ENCODE measurements at regions of chr1 and their contacts with region 1.

Region 1: DNA sequence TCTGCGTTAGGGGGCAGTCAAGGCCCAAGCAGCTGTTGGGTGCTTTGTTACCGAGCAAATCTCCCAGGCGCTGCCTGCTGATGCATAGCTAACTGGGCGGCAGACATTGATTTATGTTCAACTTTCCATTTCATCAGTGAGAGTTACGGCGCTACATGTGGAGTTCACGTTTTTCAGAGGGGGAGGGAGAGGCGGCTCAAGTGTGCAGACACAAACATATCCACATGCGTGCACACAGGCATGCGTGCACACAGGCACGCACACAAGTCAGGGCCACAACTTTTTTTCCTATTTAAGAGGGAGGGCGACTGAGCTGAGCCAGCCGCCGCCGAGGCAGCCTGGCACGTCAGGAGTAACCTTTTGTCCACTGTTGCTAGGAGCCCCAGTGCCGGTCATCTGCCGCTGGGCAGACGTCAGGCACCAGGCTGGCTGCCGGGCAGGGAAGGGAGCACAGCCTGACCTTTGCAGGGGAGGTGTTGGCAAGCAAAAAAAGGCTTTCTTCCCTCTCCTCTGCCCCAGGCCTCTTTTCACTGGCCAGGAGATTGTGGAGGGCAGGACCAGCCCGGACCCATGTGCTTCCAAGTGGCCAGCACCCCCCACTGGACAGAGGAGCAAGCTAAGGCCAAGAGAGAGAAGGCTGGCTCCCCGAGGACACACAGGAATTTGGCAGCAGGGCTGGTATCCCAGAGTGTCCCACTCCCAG is 73.3 kb downstream of the MRPL37 start:
- DNase-seq: peak; percentile 43 to 71
- ATAC-seq: peak; percentile 31 to 86 (median 67)
- H3K4me3 ChIP-seq: peak overlapping the region in 3 of 10 donors; percentile 1 to 11 (median 3)
- H3K27ac ChIP-seq: peak overlapping the region; percentile 7 to 91 (median 88)
- H3K4me1 ChIP-seq: peaks cover 49 to 89% (median 69%) of the 10 kb centered on the region in 9 donors
- H3K27me3 ChIP-seq: no peaks in the 10 kb centered on the region
- CTCF ChIP-seq: peak in 5 of 9 donors; percentile 27 to 54 (median 32)

Region 2: GRCh38 chr1:54199765-54200518 is 73.3 kb before region 1 on chr1 and contains the starts of genes CYB5RL and MRPL37:
- intact Hi-C with region 1: loop called in 1 of 10 experiments (anchors 5 kb)
- DNase-seq: peak; percentile 85 to 98
- ATAC-seq: peak; percentile 97 to 100 (median 99)
- H3K4me3 ChIP-seq: peak within 1 kb of the TSS; percentile 68 to 100 (median 84)
- H3K27ac ChIP-seq: peak within 1 kb of the TSS in 9 of 10 donors; percentile 60 to 90 (median 81)
- H3K4me1 ChIP-seq: peaks cover 6 to 32% (median 20%) of the 10 kb centered on the region in 9 donors
- H3K27me3 ChIP-seq: no peaks in the 10 kb centered on the region
- CTCF ChIP-seq: no peak
- total RNA-seq, gene CYB5RL: 3.2 to 8.3 (median 5.8) TPM
- total RNA-seq, gene MRPL37: 82.2 to 97.4 (median 90.2) TPM

Region 3: DNA sequence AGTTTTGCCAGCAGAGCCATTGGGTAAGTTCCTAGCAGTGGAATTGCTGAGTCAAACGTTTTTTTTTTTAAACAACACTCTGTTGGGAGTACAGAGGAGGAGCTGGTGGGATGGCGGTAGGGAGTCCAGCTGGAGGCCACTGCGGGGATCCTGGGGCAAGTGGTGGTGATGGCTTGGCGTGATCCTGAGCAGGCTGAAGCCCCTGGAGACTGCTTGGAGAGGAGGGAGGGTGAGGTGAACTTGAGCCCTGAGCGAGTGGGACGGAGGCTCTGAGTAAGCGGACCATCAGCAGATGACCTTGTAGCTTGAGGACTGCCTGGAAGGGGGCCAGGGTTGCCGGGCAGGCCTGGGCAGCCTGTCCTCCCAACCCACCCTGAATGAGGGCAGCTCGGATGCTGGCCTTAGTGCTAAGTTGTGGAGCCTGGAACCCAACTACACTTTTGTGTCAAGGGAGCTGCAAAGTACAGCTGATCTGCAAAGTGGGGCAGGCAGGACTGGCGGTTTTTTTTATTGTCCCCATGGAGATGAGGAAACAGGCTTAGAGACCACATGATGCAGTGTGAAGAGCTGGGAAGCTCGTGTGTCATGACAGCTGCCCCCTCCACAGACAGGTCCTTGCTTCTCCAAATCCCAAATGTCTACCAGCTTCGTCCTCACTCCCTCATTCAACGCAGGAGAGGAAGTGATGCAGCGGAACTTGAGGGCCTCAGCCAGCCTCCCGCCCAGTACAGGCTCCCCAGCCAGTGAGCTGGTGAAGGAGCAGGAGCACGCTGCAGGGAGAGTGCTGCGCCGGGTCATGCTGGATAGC is 53.0 kb before region 1 on chr1:
- intact Hi-C with region 1: loop called in 1 of 10 experiments (anchors 5 kb)
- DNase-seq: peak; percentile 68 to 69
- ATAC-seq: peak; percentile 62 to 84 (median 77)
- H3K4me3 ChIP-seq: peak overlapping the region in 5 of 10 donors; percentile 13 to 25 (median 21)
- H3K27ac ChIP-seq: peak overlapping the region in 9 of 10 donors; percentile 9 to 71 (median 59)
- H3K4me1 ChIP-seq: peaks cover 6 to 39% (median 28%) of the 10 kb centered on the region in 9 donors
- H3K27me3 ChIP-seq: no peaks in the 10 kb centered on the region
- CTCF ChIP-seq: no peak

Region 4: GRCh38 chr1:54249819-54250435 is 23.3 kb before region 1 on chr1:
- intact Hi-C with region 1: no loop called
- DNase-seq: no peak
- ATAC-seq: peak in 7 of 8 donors; percentile 25 to 72 (median 49)
- H3K4me3 ChIP-seq: no peak overlapping the region
- H3K27ac ChIP-seq: peak overlapping the region in 1 of 10 donors; percentile 48
- H3K4me1 ChIP-seq: peaks cover 0 to 49% (median 26%) of the 10 kb centered on the region in 9 donors
- H3K27me3 ChIP-seq: no peaks in the 10 kb centered on the region
- CTCF ChIP-seq: no peak

Region 5: DNA sequence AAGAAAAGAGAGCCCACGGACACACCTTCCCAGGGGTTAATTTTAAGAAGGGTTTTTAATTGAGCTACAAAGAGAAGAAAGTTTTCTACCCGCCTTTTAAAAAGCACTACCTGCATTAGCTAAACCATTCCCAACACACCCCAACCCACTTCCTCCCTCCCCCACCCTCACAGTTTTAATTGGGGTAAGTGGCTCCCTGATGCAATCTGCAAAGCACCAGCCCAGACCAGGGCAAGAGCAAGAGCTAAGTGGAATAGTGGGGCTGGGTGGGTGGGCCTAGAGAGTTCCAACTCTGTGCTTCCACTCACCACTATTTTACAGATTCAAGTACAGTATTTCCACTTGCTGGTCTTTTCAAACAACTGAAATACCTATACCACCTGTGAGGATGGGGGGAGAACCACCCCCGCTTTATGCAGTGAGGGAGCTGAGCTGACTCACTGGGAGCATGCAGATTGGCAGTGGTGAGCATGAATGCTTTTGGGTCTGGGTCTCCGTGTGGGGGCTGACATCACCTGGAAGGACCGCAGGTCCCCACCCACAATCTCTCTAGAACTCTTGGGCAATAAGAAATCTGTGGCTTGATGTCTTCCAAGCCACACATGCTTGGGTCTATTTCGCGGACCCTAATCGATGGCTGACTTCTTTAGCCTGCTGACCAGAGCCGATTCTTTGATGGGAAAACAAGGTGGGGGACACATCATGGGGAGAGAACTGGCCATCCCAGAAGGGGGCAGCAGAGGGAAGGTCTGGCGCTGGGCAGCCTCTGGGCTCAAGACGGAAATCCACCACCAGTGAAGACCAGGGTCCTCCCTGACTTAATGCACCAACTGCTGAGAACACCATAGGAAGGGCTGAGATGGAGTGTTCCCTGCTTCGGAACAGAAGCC is 37.4 kb after region 1 on chr1:
- intact Hi-C with region 1: loop called in 1 of 10 experiments (anchors 5 kb)
- DNase-seq: peak; percentile 57 to 68
- ATAC-seq: peak in 6 of 8 donors; percentile 22 to 52 (median 43)
- H3K4me3 ChIP-seq: no peak overlapping the region
- H3K27ac ChIP-seq: peak overlapping the region in 6 of 10 donors; percentile 19 to 88 (median 74)
- H3K4me1 ChIP-seq: peaks cover 14 to 92% (median 83%) of the 10 kb centered on the region in 9 donors
- H3K27me3 ChIP-seq: no peaks in the 10 kb centered on the region
- CTCF ChIP-seq: peak; percentile 16 to 71 (median 67)

Region 6: GRCh38 chr1:54335755-54336108 is 62.5 kb after region 1 on chr1:
- intact Hi-C with region 1: loop called in 1 of 10 experiments (anchors 5 kb)
- DNase-seq: peak; percentile 47 to 87
- ATAC-seq: peak; percentile 16 to 82 (median 75)
- H3K4me3 ChIP-seq: peak overlapping the region in 7 of 10 donors; percentile 14 to 43 (median 27)
- H3K27ac ChIP-seq: peak overlapping the region in 9 of 10 donors; percentile 71 to 93 (median 79)
- H3K4me1 ChIP-seq: peaks cover 36 to 100% (median 77%) of the 10 kb centered on the region in 9 donors
- H3K27me3 ChIP-seq: no peaks in the 10 kb centered on the region
- CTCF ChIP-seq: no peak

Region 7: GRCh38 chr1:54361342-54361741 is 88.1 kb after region 1 on chr1:
- intact Hi-C with region 1: loop called in 1 of 10 experiments (anchors 1 kb)
- DNase-seq: no peak
- ATAC-seq: no peak
- H3K4me3 ChIP-seq: no peak overlapping the region
- H3K27ac ChIP-seq: peak overlapping the region in 1 of 10 donors; percentile 87
- H3K4me1 ChIP-seq: peaks cover 8 to 91% (median 61%) of the 10 kb centered on the region in 9 donors
- H3K27me3 ChIP-seq: no peaks in the 10 kb centered on the region
- CTCF ChIP-seq: peak in 5 of 9 donors; percentile 15 to 52 (median 32)